Body of pancreas (tissue), 4 donors: ENCODE measurements at regions of chr1 and their contacts with region 1.

Region 1: DNA sequence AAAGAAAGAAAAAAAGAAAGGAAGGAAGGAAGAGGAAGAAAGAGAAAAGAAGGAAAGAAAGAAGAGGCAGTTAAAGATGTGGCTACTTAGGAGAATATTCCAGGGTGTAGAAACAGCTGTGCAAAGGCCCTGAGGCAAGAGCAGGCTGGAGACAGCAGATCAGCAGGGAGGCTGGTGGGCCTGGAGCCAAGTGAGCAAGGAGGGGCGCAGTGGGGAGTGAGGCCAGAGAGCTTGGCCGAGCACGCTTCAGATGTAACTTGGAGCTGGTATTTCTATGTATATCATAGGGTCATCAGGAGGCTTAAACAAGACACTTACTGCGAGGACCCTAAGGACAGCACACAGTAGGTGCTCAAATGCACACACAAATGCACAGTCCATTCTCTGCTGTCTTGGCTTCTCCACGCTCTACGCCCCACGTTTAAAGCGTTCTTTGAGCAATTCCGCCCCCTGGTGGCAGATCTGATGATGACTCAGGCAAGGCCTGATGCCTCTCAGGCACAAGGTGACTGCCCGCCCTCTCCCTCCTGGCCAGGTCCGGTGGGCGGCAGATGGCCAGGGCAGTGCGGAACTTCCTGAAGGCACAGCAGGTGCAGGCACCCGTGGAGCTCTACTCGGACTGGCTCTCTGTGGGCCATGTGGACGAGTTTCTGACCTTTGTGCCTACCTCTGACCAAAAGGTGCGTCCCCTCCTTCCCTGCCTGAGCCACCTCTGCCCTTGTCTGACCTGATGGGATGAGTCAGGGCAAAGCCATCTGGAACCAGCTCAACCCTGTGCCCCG is 11.9 kb upstream of the PADI3 start:
- DNase-seq: peak; percentile 88 to 92 (median 90)
- ATAC-seq: peak; percentile 73
- H3K4me3 ChIP-seq: no peak overlapping the region
- H3K27ac ChIP-seq: no peak overlapping the region
- H3K4me1 ChIP-seq: peaks cover 16% of the 10 kb centered on the region
- H3K27me3 ChIP-seq: no peaks in the 10 kb centered on the region
- CTCF ChIP-seq: peak; percentile 78 to 90 (median 87)
- POLR2A ChIP-seq: no peak

Region 2: GRCh38 chr1:17119076-17119772 is 117.7 kb before region 1 on chr1 and contains the start of gene PADI2:
- intact Hi-C with region 1: loop called (anchors 5 kb)
- DNase-seq: peak; percentile 69 to 82 (median 79)
- ATAC-seq: peak; percentile 82
- H3K4me3 ChIP-seq: no peak within 1 kb of the TSS
- H3K27ac ChIP-seq: peak within 1 kb of the TSS in 1 of 4 donors; percentile 23
- H3K4me1 ChIP-seq: peaks cover 24% of the 10 kb centered on the region
- H3K27me3 ChIP-seq: no peaks in the 10 kb centered on the region
- CTCF ChIP-seq: no peak
- POLR2A ChIP-seq: peak; percentile 21 to 57 (median 33)
- total RNA-seq, gene PADI2: 2.3 to 3.0 TPM

Region 3: GRCh38 chr1:17141441-17142197 is 95.4 kb before region 1 on chr1:
- intact Hi-C with region 1: no loop called
- DNase-seq: peak in 1 of 4 donors; percentile 34
- ATAC-seq: no peak
- H3K4me3 ChIP-seq: no peak overlapping the region
- H3K27ac ChIP-seq: peak overlapping the region in 1 of 4 donors; percentile 58
- H3K4me1 ChIP-seq: no peaks in the 10 kb centered on the region
- H3K27me3 ChIP-seq: no peaks in the 10 kb centered on the region
- CTCF ChIP-seq: no peak
- POLR2A ChIP-seq: no peak

Region 4: GRCh38 chr1:17297991-17298390 is 61.0 kb after region 1 on chr1:
- intact Hi-C with region 1: no loop called
- DNase-seq: no peak
- ATAC-seq: no peak
- H3K4me3 ChIP-seq: no peak overlapping the region
- H3K27ac ChIP-seq: no peak overlapping the region
- H3K4me1 ChIP-seq: no peaks in the 10 kb centered on the region
- H3K27me3 ChIP-seq: no peaks in the 10 kb centered on the region
- CTCF ChIP-seq: no peak
- POLR2A ChIP-seq: no peak